Right ventricle myocardium superior (tissue), 1 donor: ENCODE measurements at regions of chr9 and their contacts with region 1.

Region 1: DNA sequence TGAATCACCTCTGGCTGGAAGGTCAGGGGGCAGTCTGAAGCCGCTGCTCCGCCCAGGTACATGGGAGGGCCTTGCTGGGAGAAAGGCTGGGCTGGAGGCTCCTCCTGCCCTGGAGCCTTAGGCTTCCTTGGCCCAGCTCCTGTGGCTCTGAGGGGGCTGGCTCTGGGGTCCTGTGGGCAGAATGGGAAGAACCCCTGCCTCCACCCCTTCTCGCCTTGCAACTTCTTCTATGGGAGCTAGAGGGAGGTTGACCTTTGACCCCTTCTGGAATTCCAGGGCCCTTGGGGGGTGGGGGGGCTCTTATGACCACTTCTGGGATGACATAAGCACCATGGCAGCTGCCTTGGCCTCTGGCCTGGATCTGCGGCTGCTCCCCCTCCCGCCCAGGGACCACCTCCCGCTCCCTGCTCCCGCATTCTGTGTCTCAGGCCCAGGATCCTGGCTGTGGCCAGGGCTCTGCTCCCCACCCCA is 32.2 kb downstream of the IER5L start:
- DNase-seq: peak; percentile 69
- ATAC-seq: no peak

Region 2: GRCh38 chr9:129172802-129173201 is 26.9 kb after region 1 on chr9:
- intact Hi-C with region 1: loop called (anchors 2 kb)
- DNase-seq: no peak
- ATAC-seq: no peak